A673 (cell line): ENCODE measurements at regions of chr16 and their contacts with region 1.

Region 1: DNA sequence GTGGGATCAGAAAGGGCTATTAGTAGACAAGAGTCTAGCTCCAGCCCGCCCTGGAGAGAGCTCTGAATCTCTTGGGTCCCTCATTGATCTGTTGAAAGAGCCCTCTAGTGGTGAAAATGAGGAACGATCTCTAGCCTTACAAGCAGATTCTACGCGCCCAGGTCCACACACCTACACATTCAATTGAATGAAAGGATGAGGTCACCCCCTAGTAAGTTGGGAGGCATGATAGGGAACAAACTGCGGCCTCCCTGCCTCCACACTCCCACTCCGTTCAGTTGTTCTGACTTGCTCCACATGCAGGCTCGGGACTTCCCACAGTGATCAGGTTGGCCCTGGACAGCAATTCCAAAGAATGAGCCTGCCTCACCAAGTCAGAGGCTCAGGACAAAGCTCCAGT is 2.9 kb upstream of the CACNG3 start:
- DNase-seq: peak; percentile 83
- H3K4me3 ChIP-seq: no peak overlapping the region
- H3K27ac ChIP-seq: no peak overlapping the region
- H3K4me1 ChIP-seq: peaks cover 19% of the 10 kb centered on the region
- H3K27me3 ChIP-seq: peaks cover 7% of the 10 kb centered on the region
- CTCF ChIP-seq: peak; percentile 80

Region 2: DNA sequence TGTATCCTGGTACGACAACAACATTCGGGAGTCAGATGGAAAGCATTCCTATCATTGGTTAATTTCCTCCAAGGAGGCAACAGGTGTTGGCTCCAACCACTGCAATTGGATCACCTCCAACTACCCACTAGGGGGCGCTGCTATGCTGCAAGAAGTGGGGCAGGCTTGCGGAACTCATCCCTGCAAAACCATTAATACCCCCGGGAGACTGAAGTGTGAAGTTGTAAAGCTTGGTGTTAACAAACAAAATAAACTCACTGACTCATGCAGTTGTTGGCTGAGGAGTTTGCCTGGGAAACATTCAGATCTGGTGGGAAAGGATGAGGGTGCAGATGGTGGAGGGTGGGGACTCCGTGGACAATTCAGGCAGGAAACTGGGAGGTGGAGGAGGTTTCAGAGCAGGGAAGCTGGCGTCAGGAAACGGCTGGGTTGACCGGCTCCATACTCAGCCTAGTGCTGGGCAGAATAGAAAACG is 1354.3 kb before region 1 on chr16:
- CTCF ChIA-PET with region 1: interaction called, 12 read pairs
- POLR2A ChIA-PET with region 1: no interaction called
- intact Hi-C with region 1: no loop called
- DNase-seq: peak; percentile 89
- H3K4me3 ChIP-seq: no peak overlapping the region
- H3K27ac ChIP-seq: no peak overlapping the region
- H3K4me1 ChIP-seq: no peaks in the 10 kb centered on the region
- H3K27me3 ChIP-seq: peaks cover 13% of the 10 kb centered on the region
- CTCF ChIP-seq: peak; percentile 94

Region 3: GRCh38 chr16:24041826-24042631 is 211.2 kb before region 1 on chr16:
- CTCF ChIA-PET with region 1: interaction called, 8 read pairs
- POLR2A ChIA-PET with region 1: no interaction called
- intact Hi-C with region 1: loop called (anchors 2 kb)
- DNase-seq: peak; percentile 87
- H3K4me3 ChIP-seq: no peak overlapping the region
- H3K27ac ChIP-seq: no peak overlapping the region
- H3K4me1 ChIP-seq: peaks cover 23% of the 10 kb centered on the region
- H3K27me3 ChIP-seq: no peaks in the 10 kb centered on the region
- CTCF ChIP-seq: peak; percentile 86

Region 4: GRCh38 chr16:24098896-24099295 is 154.3 kb before region 1 on chr16:
- CTCF ChIA-PET with region 1: interaction called, 10 read pairs
- POLR2A ChIA-PET with region 1: no interaction called
- intact Hi-C with region 1: no loop called
- DNase-seq: peak; percentile 74
- H3K4me3 ChIP-seq: no peak overlapping the region
- H3K27ac ChIP-seq: peak overlapping the region; percentile 32
- H3K4me1 ChIP-seq: peaks cover 28% of the 10 kb centered on the region
- H3K27me3 ChIP-seq: no peaks in the 10 kb centered on the region
- CTCF ChIP-seq: no peak

Region 5: DNA sequence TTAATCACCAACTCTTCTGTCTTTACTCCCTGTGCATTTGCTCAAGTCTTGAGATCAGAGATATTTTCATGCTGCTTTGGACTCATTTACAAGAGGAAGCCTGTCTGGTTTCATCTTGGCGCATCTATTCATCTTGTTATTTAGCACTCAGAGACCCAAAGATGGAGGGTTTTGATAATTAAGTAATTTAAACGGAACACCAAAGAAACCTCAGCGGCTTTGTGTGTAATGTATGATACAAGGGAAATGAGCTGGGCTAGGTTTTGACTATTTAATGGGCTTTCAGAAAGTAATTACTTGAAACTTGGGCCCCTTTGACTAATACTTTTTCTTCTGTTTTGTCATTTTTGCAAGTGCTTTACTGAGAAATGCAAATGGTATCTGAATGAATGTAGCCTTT is 63.3 kb before region 1 on chr16:
- CTCF ChIA-PET with region 1: no interaction called
- POLR2A ChIA-PET with region 1: no interaction called
- intact Hi-C with region 1: no loop called
- DNase-seq: peak; percentile 39
- H3K4me3 ChIP-seq: no peak overlapping the region
- H3K27ac ChIP-seq: no peak overlapping the region
- H3K4me1 ChIP-seq: no peaks in the 10 kb centered on the region
- H3K27me3 ChIP-seq: no peaks in the 10 kb centered on the region
- CTCF ChIP-seq: no peak

Region 6: GRCh38 chr16:24302631-24303030 is 49.4 kb after region 1 on chr16:
- CTCF ChIA-PET with region 1: no interaction called
- POLR2A ChIA-PET with region 1: no interaction called
- intact Hi-C with region 1: loop called (anchors 5 kb)
- DNase-seq: no peak
- H3K4me3 ChIP-seq: no peak overlapping the region
- H3K27ac ChIP-seq: no peak overlapping the region
- H3K4me1 ChIP-seq: peaks cover 8% of the 10 kb centered on the region
- H3K27me3 ChIP-seq: no peaks in the 10 kb centered on the region
- CTCF ChIP-seq: no peak

Region 7: GRCh38 chr16:24430945-24431760 is 178.0 kb after region 1 on chr16:
- CTCF ChIA-PET with region 1: no interaction called
- POLR2A ChIA-PET with region 1: no interaction called
- intact Hi-C with region 1: no loop called
- DNase-seq: peak; percentile 75
- H3K4me3 ChIP-seq: no peak overlapping the region
- H3K27ac ChIP-seq: no peak overlapping the region
- H3K4me1 ChIP-seq: peaks cover 31% of the 10 kb centered on the region
- H3K27me3 ChIP-seq: no peaks in the 10 kb centered on the region
- CTCF ChIP-seq: no peak

Region 8: GRCh38 chr16:24609740-24610415 is 356.7 kb after region 1 on chr16:
- CTCF ChIA-PET with region 1: interaction called, 12 read pairs
- POLR2A ChIA-PET with region 1: no interaction called
- intact Hi-C with region 1: no loop called
- DNase-seq: peak; percentile 93
- H3K4me3 ChIP-seq: peak overlapping the region; percentile 49
- H3K27ac ChIP-seq: peak overlapping the region; percentile 18
- H3K4me1 ChIP-seq: peaks cover 4% of the 10 kb centered on the region
- H3K27me3 ChIP-seq: no peaks in the 10 kb centered on the region
- CTCF ChIP-seq: no peak